ENCODE measurements at regions of chr12 and their contacts with region 1.

Region 1: GRCh38 chr12:45234139-45234846 is 18.4 kb downstream of the ANO6 start:
- DNase-seq: no peak
- ATAC-seq: peak; percentile 60
- H3K4me3 Mint-ChIP-seq: peak overlapping the region; percentile 4
- H3K27ac Mint-ChIP-seq: peak overlapping the region; percentile 85
- H3K4me1 Mint-ChIP-seq: peaks cover 69% of the 10 kb centered on the region
- H3K27me3 Mint-ChIP-seq: no peaks in the 10 kb centered on the region

Region 2: DNA sequence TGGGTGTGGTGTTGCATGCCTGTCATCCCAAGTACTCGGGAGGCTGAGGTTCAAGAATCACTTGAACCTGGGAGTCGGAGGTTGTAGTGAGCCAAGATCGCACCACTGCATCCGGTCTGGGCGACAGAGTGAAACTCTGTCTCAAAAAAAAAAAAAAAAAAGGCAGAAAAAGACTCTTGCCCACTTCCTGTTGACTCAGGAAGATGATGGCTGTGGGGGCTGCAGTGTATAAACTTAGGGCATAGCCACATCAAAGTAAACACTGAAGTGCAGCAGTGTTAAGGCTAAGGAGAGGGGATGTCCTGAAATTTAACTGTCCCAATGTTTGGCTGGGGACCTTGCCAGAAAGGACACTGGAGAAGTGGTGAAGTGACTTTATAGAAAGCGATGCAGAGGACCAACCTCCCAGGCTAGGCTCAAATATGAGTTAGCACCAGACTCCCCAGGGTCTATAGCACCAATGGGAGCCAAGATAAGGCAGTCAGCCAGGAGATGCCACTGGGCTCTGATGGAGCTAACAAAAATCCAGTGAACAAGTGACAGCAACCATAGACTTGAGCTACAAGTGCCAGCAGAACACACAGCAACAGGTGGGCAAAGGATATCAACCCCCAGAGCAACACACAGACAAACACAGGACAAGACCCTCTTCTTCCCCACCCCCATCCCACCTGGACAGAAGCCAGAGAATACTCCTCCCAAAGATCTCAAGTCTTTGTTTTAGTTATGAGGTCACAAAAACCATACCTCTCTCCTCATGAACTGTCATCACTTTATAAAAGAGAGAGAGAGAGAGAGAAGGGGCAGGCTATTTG is 386.2 kb before region 1 on chr12:
- CTCF ChIA-PET with region 1: no interaction called
- POLR2A ChIA-PET with region 1: no interaction called
- intact Hi-C with region 1: loop called in 1 of 2 experiments (anchors 10 kb)
- DNase-seq: peak; percentile 78
- ATAC-seq: peak; percentile 86
- H3K4me3 Mint-ChIP-seq: peak overlapping the region; percentile 59
- H3K27ac Mint-ChIP-seq: peak overlapping the region; percentile 96
- H3K4me1 Mint-ChIP-seq: peaks cover 80% of the 10 kb centered on the region
- H3K27me3 Mint-ChIP-seq: no peaks in the 10 kb centered on the region

Region 3: GRCh38 chr12:45191239-45191638 is 43.1 kb before region 1 on chr12:
- CTCF ChIA-PET with region 1: no interaction called
- POLR2A ChIA-PET with region 1: no interaction called
- intact Hi-C with region 1: loop called in 1 of 2 experiments (anchors 2 kb)
- DNase-seq: no peak
- ATAC-seq: peak; percentile 69
- H3K4me3 Mint-ChIP-seq: no peak overlapping the region
- H3K27ac Mint-ChIP-seq: no peak overlapping the region
- H3K4me1 Mint-ChIP-seq: peaks cover 16% of the 10 kb centered on the region
- H3K27me3 Mint-ChIP-seq: no peaks in the 10 kb centered on the region

Region 4: GRCh38 chr12:45215419-45216229 is 18.7 kb before region 1 on chr12 and contains the start of gene ANO6:
- CTCF ChIA-PET with region 1: interaction called, 11 read pairs
- POLR2A ChIA-PET with region 1: no interaction called
- intact Hi-C with region 1: loop called (anchors 1 kb)
- DNase-seq: peak; percentile 89
- ATAC-seq: peak; percentile 83
- H3K4me3 Mint-ChIP-seq: peak within 1 kb of the TSS; percentile 89
- H3K27ac Mint-ChIP-seq: peak within 1 kb of the TSS; percentile 90
- H3K4me1 Mint-ChIP-seq: peaks cover 39% of the 10 kb centered on the region
- H3K27me3 Mint-ChIP-seq: no peaks in the 10 kb centered on the region
- total RNA-seq, gene ANO6: 18.7 to 20.3 TPM

Region 5: DNA sequence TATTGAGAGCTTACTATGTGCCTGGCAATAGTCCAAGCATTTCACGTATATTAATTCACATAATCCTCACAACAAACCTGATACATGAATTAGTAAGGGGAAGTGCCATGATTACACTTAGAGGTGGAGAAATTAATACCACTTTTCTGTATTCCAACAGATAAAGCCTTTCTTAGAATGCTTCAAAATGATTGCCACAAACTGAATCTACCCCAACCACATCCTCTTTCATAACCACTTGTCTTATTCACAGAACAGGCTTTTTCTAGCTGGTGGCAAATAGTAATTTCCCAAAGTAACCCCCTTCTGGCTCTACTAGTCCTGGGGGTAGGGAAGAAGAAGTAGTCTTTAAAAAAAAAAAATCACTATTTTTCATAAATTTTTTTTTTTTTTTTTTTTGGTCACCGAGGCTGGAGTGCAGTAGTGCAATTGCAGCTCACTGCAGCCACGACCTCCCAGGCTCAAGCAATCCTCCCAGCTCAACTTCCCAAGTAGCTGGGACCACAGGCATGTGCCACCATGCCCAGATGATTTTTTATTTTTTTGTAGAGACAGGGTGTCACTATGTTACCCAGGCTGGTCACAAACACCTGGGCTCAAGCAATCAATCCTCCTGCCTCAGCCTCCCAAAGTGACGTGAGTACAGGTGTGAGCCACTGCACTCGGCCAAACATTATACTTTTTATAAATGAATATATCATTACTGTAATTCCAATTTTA is 436.2 kb after region 1 on chr12:
- CTCF ChIA-PET with region 1: no interaction called
- POLR2A ChIA-PET with region 1: no interaction called
- intact Hi-C with region 1: loop called in 1 of 2 experiments (anchors 5 kb)
- DNase-seq: peak; percentile 10
- ATAC-seq: peak; percentile 70
- H3K4me3 Mint-ChIP-seq: no peak overlapping the region
- H3K27ac Mint-ChIP-seq: no peak overlapping the region
- H3K4me1 Mint-ChIP-seq: peaks cover 24% of the 10 kb centered on the region
- H3K27me3 Mint-ChIP-seq: peaks cover 4% of the 10 kb centered on the region

Region 6: GRCh38 chr12:46382964-46383653 is 1148.8 kb after region 1 on chr12:
- CTCF ChIA-PET with region 1: no interaction called
- POLR2A ChIA-PET with region 1: no interaction called
- intact Hi-C with region 1: loop called in 1 of 2 experiments (anchors 10 kb)
- DNase-seq: peak; percentile 97
- ATAC-seq: peak; percentile 83
- H3K4me3 Mint-ChIP-seq: peak overlapping the region; percentile 74
- H3K27ac Mint-ChIP-seq: peak overlapping the region; percentile 89
- H3K4me1 Mint-ChIP-seq: peaks cover 39% of the 10 kb centered on the region
- H3K27me3 Mint-ChIP-seq: no peaks in the 10 kb centered on the region